ENCODE measurements at regions of chr1 and their contacts with region 1.

Region 1: DNA sequence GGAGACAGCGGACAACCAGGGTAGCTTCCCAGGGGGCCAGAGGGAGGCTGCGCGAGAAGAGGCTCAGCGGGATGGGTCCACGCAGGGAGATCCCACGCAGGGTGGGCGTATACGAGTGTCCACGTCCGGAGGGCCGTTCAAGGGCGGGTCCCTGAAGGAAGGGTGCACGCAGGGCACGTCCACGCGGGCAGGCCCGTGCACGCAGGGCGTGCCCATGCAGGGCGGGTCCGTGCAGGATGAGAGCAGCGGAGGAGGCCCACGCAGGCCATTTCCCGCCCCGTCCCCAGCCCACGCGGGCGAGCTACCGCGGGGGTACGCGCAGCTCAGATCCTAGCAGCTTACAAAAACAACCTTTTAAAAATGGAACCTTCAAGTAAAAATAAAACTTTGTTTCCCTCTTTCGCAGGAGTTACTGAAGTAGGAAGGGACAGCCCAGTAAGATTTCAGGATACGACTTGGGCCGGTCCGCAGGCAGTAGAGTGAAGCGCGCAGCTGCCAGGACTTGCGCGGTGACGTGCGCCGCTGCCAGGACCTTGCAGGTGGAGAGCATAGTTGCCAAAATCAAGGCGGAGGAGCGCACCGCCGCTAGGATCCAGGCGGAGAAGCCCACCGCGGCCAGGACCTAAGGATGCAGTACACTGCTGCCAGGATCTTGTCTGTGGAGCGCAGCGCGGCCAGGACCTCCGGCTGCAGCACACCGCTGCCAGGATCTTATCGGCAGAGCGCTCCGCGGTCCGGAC is 416 bp upstream of the RNF187 start:
- DNase-seq: peak; percentile 82
- H3K4me3 Mint-ChIP-seq: peak overlapping the region; percentile 94
- H3K27ac Mint-ChIP-seq: peak overlapping the region; percentile 96
- H3K4me1 Mint-ChIP-seq: peaks cover 56% of the 10 kb centered on the region
- H3K27me3 Mint-ChIP-seq: no peaks in the 10 kb centered on the region

Region 2: DNA sequence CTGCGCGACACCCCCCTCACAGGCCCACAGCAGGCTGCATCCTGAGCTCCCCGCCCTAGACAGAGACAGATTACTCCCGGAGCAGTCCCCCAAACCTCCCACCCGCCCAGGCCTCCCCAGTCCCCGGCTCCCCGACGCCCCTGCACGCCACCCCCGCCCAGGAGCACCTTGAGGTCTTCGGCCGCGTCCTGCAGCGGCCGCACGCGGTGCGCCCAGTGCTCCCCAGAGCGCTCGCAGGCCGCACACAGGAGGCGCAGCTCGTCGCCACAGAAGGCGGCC is 80.8 kb before region 1 on chr1:
- CTCF ChIA-PET with region 1: interaction called, 7 read pairs
- POLR2A ChIA-PET with region 1: interaction called, 10 read pairs
- DNase-seq: no peak
- H3K4me3 Mint-ChIP-seq: peak overlapping the region; percentile 85
- H3K27ac Mint-ChIP-seq: peak overlapping the region; percentile 90
- H3K4me1 Mint-ChIP-seq: peaks cover 61% of the 10 kb centered on the region
- H3K27me3 Mint-ChIP-seq: no peaks in the 10 kb centered on the region

Region 3: GRCh38 chr1:228471762-228472398 is 14.9 kb before region 1 on chr1:
- CTCF ChIA-PET with region 1: interaction called, 21 read pairs
- POLR2A ChIA-PET with region 1: interaction called, 153 read pairs
- DNase-seq: peak; percentile 39
- H3K4me3 Mint-ChIP-seq: no peak overlapping the region
- H3K27ac Mint-ChIP-seq: no peak overlapping the region
- H3K4me1 Mint-ChIP-seq: peaks cover 40% of the 10 kb centered on the region
- H3K27me3 Mint-ChIP-seq: peaks cover 3% of the 10 kb centered on the region

Region 4: DNA sequence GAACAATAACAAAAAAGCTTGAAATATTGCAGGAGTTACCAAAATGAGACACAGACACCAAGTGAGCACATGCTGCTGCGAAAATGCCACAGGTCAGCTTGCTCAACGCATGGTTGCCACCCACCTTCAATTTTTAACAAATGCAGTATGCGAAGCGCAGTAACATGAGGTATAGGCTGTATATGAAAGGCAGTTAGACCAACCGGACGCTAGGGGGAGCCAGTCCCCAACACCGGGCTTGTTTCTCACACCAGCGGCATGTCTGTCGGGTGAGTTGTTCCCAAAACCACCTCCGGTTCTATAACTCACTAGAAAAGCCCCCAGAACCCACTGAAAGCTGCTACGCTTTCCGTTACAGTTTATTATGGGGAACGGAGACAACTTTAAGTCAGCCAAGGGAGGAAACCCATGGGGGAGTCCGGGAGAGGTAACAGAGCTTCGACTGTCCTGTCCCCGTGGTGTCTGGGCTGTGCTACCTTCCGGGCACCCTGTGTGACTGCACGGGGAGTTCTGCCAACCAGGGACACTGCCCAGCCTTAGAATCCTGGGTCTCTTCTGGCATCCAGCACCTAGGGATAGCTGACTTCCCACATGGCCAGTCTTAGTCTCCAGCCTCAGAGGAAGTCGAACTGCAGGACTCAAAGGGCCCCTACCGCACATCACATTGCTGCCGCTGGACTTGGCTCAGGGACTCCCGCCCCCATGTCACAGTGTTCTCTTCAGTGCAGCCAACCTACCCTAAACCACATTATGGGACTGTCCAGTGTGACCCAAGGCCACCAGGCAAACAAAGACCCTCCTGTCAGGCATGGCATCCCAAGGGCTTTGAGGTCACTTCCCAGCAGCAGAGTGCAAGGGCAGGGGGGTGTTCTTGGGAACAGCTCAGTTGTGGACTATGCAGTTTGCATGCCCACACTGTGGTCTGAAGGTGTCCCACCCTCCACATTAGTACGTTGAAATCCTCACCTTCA is 14.4 kb after region 1 on chr1:
- CTCF ChIA-PET with region 1: interaction called, 12 read pairs
- POLR2A ChIA-PET with region 1: interaction called, 29 read pairs
- DNase-seq: peak; percentile 90
- H3K4me3 Mint-ChIP-seq: peak overlapping the region; percentile 40
- H3K27ac Mint-ChIP-seq: peak overlapping the region; percentile 41
- H3K4me1 Mint-ChIP-seq: peaks cover 38% of the 10 kb centered on the region
- H3K27me3 Mint-ChIP-seq: no peaks in the 10 kb centered on the region